Colonic mucosa (tissue), 4 donors: ENCODE measurements at regions of chr9 and their contacts with region 1.

Region 1: GRCh38 chr9:112890106-112891081 is at the start of gene SLC46A2:
- DNase-seq: no peak
- H3K4me3 ChIP-seq: peak within 1 kb of the TSS; percentile 16
- H3K27ac ChIP-seq: no peak within 1 kb of the TSS
- H3K4me1 ChIP-seq: no peaks in the 10 kb centered on the region
- H3K27me3 ChIP-seq: peaks cover 15% of the 10 kb centered on the region
- CTCF ChIP-seq: no peak
- total RNA-seq, gene SLC46A2: not detected

Region 2: GRCh38 chr9:112725961-112726360 is 164.4 kb before region 1 on chr9:
- intact Hi-C with region 1: no loop called
- DNase-seq: no peak
- H3K4me3 ChIP-seq: no peak overlapping the region
- H3K27ac ChIP-seq: no peak overlapping the region
- H3K4me1 ChIP-seq: no peaks in the 10 kb centered on the region
- H3K27me3 ChIP-seq: no peaks in the 10 kb centered on the region
- CTCF ChIP-seq: no peak

Region 3: GRCh38 chr9:112955550-112955949 is 65.2 kb after region 1 on chr9:
- intact Hi-C with region 1: loop called (anchors 10 kb)
- DNase-seq: no peak
- H3K4me3 ChIP-seq: no peak overlapping the region
- H3K27ac ChIP-seq: no peak overlapping the region
- H3K4me1 ChIP-seq: no peaks in the 10 kb centered on the region
- H3K27me3 ChIP-seq: no peaks in the 10 kb centered on the region
- CTCF ChIP-seq: no peak